Posterior vena cava (tissue), 2 donors: ENCODE measurements at regions of chr12 and their contacts with region 1.

Region 1: DNA sequence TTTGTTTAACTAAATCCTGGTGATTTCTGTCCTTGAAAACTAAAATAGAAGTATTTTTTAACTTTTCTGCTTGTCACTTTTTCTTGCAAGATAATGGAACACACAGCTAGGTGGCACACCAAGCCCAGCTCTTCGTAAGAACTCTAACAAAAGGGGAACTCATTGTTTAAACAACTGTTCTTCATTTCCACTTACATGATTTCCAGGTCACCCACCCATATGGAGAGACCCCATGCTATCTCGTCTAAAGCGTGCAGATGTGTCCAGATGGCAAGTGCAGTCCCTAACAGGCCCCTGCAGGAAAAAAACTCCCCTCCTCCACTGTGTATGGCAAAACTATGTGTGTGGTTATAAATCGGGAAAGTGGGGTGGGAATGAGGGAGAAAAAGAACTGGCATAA is 43.3 kb upstream of the NT5DC3 start:
- DNase-seq: no peak

Region 2: GRCh38 chr12:104108755-104109445 is 224.6 kb after region 1 on chr12:
- intact Hi-C with region 1: loop called in 1 of 2 experiments (anchors 10 kb)
- DNase-seq: peak; percentile 94